GM23248 (cell line): ENCODE measurements at regions of chr1 and their contacts with region 1.

Region 1: DNA sequence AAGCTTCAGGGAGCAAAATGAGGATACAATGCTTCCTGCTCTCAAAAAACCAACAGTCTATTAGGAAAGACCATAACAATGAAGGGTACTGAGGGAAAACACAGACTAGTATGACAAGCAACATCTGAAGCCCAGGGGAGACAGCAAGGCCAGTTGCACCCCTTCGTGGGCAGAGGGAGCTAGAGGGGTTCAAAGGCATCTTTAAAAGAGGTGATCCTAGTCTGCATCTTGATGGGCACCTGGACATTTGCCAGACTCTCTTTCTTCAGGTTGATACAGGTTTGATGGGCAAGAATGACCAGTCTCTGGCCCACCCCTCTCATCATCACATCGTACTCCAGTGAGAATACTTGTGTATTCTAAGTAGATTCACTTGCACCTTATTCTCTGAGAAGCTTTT is 177.7 kb downstream of the VAV3 start:
- DNase-seq: peak; percentile 3
- H3K4me3 ChIP-seq: no peak overlapping the region
- H3K27ac ChIP-seq: no peak overlapping the region
- H3K4me1 ChIP-seq: no peaks in the 10 kb centered on the region
- H3K27me3 ChIP-seq: no peaks in the 10 kb centered on the region

Region 2: GRCh38 chr1:108125312-108126138 is 338.2 kb after region 1 on chr1:
- in situ Hi-C with region 1: loop called (anchors 5 kb)
- DNase-seq: peak; percentile 80
- H3K4me3 ChIP-seq: no peak overlapping the region
- H3K27ac ChIP-seq: no peak overlapping the region
- H3K4me1 ChIP-seq: no peaks in the 10 kb centered on the region
- H3K27me3 ChIP-seq: no peaks in the 10 kb centered on the region